ENCODE measurements at regions of chr9 and their contacts with region 1.

Region 1: GRCh38 chr9:95433096-95433819 is 83.5 kb downstream of the PTCH1 start:
- DNase-seq: no peak
- ATAC-seq: no peak
- H3K4me3 ChIP-seq: no peak overlapping the region
- H3K27ac ChIP-seq: no peak overlapping the region
- H3K4me1 ChIP-seq: peaks cover 24% of the 10 kb centered on the region
- H3K27me3 ChIP-seq: no peaks in the 10 kb centered on the region
- CTCF ChIP-seq: no peak
- EP300 ChIP-seq: no peak
- POLR2A ChIP-seq: no peak
- RAD21 ChIP-seq: no peak

Region 2: DNA sequence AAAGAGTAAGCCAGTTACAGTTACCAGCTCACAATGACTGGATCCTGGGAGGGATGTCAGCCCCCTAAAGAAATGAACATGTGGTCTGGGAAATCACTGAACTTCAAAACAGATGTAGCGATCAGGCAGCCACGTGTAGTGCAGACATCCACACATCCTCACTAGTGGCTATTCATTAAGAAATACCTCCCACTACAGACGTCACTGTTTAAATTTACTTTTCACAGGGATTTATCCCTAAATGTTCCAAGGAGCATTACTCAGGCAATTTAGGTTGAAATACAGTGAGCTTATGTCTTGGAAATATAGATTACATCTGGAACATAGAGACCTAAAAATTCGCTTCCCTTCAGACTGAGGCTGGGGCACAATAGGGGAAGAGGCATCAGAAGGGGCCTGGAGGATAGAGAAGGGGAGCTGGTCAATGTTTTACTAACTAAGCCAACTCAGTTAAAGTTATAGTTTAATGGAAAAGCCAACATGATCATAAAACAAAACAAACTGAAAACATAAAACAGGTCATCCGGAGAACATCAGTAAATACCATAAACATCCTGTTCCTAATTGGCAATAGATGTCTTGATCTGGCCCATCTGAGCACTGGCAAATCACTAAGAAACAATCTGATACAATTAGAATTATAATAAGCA is 208.1 kb before region 1 on chr9:
- CTCF ChIA-PET with region 1: no interaction called
- POLR2A ChIA-PET with region 1: no interaction called
- in situ Hi-C with region 1: no loop called
- intact Hi-C with region 1: no loop called
- DNase-seq: peak; percentile 2
- ATAC-seq: peak; percentile 62; the same call in 2 of the 3 replicates
- H3K4me3 ChIP-seq: no peak overlapping the region
- H3K27ac ChIP-seq: no peak overlapping the region
- H3K4me1 ChIP-seq: peaks cover 48% of the 10 kb centered on the region
- H3K27me3 ChIP-seq: no peaks in the 10 kb centered on the region
- CTCF ChIP-seq: no peak
- EP300 ChIP-seq: no peak
- POLR2A ChIP-seq: no peak
- RAD21 ChIP-seq: no peak

Region 3: GRCh38 chr9:95505717-95506427 is 72.6 kb after region 1 on chr9:
- CTCF ChIA-PET with region 1: no interaction called
- POLR2A ChIA-PET with region 1: no interaction called
- in situ Hi-C with region 1: no loop called
- intact Hi-C with region 1: loop called (anchors 2 kb)
- DNase-seq: peak; percentile 70
- ATAC-seq: peak; percentile 11
- H3K4me3 ChIP-seq: peak overlapping the region; percentile 80 to 93 (median 82)
- H3K27ac ChIP-seq: peak overlapping the region; percentile 93
- H3K4me1 ChIP-seq: peaks cover 28% of the 10 kb centered on the region
- H3K27me3 ChIP-seq: no peaks in the 10 kb centered on the region; a peak in 1 of 5 replicates
- CTCF ChIP-seq: no peak
- EP300 ChIP-seq: 0 out of 4 replicates have a peak, but pooled peaks of 1 of the 2 experiments have one; percentile 5
- POLR2A ChIP-seq: no peak
- RAD21 ChIP-seq: peak; percentile 39; the same call in 1 of the 2 replicates

Region 4: GRCh38 chr9:95778957-95779356 is 345.7 kb after region 1 on chr9:
- CTCF ChIA-PET with region 1: no interaction called
- POLR2A ChIA-PET with region 1: no interaction called
- in situ Hi-C with region 1: no loop called
- intact Hi-C with region 1: no loop called
- DNase-seq: no peak
- ATAC-seq: no peak
- H3K4me3 ChIP-seq: no peak overlapping the region
- H3K27ac ChIP-seq: no peak overlapping the region
- H3K4me1 ChIP-seq: peaks cover 41% of the 10 kb centered on the region
- H3K27me3 ChIP-seq: no peaks in the 10 kb centered on the region
- CTCF ChIP-seq: no peak
- EP300 ChIP-seq: no peak
- POLR2A ChIP-seq: no peak
- RAD21 ChIP-seq: no peak

Measured in HepG2 (cell line).